ENCODE measurements at regions of chr7 and their contacts with region 1.

Region 1: GRCh38 chr7:28062197-28062991 is 118.2 kb downstream of the JAZF1 start:
- DNase-seq: peak; percentile 61
- H3K4me3 Mint-ChIP-seq: no peak overlapping the region
- H3K27ac Mint-ChIP-seq: no peak overlapping the region
- H3K4me1 Mint-ChIP-seq: peaks cover 2% of the 10 kb centered on the region
- H3K27me3 Mint-ChIP-seq: peaks cover 4% of the 10 kb centered on the region

Region 2: DNA sequence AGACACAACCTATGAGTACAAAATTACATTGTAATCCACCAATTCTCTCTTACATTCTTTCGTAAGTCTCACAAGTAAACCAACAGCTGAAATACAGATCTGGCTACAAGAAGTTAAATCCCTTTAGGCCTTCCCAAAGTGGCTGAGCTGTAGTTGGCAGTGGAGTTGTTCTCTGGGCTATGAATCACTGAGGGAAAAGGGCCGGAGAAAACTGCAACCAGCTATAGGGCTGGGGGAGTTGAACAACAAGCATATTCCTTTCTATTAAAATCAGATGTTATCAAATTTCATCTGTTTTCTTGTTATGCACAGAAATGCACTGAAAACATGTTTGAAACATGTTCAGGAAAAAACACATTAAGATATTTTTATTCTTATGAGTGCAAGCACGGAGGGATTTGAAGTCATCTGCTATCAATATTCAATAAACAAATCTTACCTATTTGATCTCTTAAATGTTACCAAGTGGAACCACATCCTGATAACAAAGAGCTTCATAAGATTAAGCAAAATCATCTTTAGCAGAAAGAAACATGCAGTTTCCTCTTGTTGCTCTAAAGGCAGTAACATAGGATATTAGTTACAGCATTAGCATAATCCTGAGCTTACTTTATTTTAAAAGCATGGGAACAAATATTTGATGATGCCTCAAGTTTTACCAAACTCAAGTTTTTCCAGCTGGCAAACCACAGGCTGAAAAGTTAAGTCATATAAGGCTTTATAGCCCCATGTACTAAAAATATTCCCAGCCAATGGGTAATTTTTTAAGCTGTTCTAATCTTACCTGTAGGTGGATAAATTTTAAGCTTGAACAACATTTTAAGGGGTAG is 109.7 kb before region 1 on chr7:
- CTCF ChIA-PET with region 1: no interaction called
- POLR2A ChIA-PET with region 1: no interaction called
- DNase-seq: no peak
- H3K4me3 Mint-ChIP-seq: no peak overlapping the region
- H3K27ac Mint-ChIP-seq: no peak overlapping the region
- H3K4me1 Mint-ChIP-seq: no peaks in the 10 kb centered on the region
- H3K27me3 Mint-ChIP-seq: no peaks in the 10 kb centered on the region

Region 3: DNA sequence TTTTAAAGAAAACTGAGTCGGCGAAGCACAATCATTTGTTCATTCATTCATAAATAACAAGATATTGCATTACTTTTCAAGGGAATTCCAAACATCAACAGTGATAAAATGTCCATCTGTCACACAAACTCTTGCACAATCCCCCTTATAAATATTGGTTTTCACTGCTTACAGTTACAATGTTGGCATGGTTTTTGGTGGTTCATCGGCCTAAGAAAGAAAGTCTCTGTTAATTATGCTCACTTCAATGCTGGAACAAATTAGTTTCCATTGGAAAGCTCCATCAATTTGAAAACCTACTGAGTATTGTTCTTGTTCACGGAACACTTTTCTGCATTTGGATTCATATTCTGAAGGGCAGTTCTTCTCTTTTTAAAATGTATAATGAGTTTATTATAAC is 70.3 kb before region 1 on chr7:
- CTCF ChIA-PET with region 1: no interaction called
- POLR2A ChIA-PET with region 1: no interaction called
- DNase-seq: no peak
- H3K4me3 Mint-ChIP-seq: no peak overlapping the region
- H3K27ac Mint-ChIP-seq: no peak overlapping the region
- H3K4me1 Mint-ChIP-seq: peaks cover 5% of the 10 kb centered on the region
- H3K27me3 Mint-ChIP-seq: no peaks in the 10 kb centered on the region

Region 4: GRCh38 chr7:28078036-28078901 is 15.9 kb after region 1 on chr7:
- CTCF ChIA-PET with region 1: interaction called, 34 read pairs
- POLR2A ChIA-PET with region 1: interaction called, 3 read pairs
- DNase-seq: peak; percentile 51
- H3K4me3 Mint-ChIP-seq: no peak overlapping the region
- H3K27ac Mint-ChIP-seq: no peak overlapping the region
- H3K4me1 Mint-ChIP-seq: no peaks in the 10 kb centered on the region
- H3K27me3 Mint-ChIP-seq: no peaks in the 10 kb centered on the region

Region 5: GRCh38 chr7:28096713-28097112 is 34.3 kb after region 1 on chr7:
- CTCF ChIA-PET with region 1: interaction called, 21 read pairs
- POLR2A ChIA-PET with region 1: no interaction called
- DNase-seq: peak; percentile 19
- H3K4me3 Mint-ChIP-seq: no peak overlapping the region
- H3K27ac Mint-ChIP-seq: no peak overlapping the region
- H3K4me1 Mint-ChIP-seq: no peaks in the 10 kb centered on the region
- H3K27me3 Mint-ChIP-seq: no peaks in the 10 kb centered on the region

Region 6: DNA sequence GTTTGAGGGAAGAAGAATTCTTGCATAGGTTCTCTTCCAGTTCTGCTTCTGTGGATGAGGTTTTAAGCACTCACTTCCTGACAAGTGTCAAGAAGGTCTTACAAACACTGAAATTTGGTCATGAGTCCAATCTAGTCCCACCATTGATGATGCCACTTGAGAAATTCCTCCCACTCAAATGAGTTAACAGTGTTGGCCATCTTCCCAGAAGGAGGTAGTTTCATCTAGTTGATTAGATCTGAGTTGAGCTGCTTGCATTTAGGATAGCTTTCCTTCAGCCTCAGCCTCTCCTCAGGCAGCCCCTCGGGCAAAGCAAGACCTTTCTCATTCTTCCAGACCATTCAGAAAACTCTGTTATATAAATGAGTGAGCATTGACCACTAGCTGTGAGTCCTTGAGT is 706.2 kb after region 1 on chr7:
- CTCF ChIA-PET with region 1: no interaction called
- POLR2A ChIA-PET with region 1: no interaction called
- DNase-seq: no peak
- H3K4me3 Mint-ChIP-seq: no peak overlapping the region
- H3K27ac Mint-ChIP-seq: no peak overlapping the region
- H3K4me1 Mint-ChIP-seq: no peaks in the 10 kb centered on the region
- H3K27me3 Mint-ChIP-seq: no peaks in the 10 kb centered on the region